Panc1 (cell line): ENCODE measurements at regions of chr12 and their contacts with region 1.

Region 1: GRCh38 chr12:95998611-95999286 is 2.6 kb upstream of the HAL start:
- DNase-seq: peak; percentile 25
- ATAC-seq: peak; percentile 91
- H3K4me3 ChIP-seq: no peak overlapping the region
- H3K27ac ChIP-seq: no peak overlapping the region
- H3K4me1 ChIP-seq: no peaks in the 10 kb centered on the region
- H3K27me3 ChIP-seq: no peaks in the 10 kb centered on the region
- CTCF ChIP-seq: peak; percentile 77

Region 2: GRCh38 chr12:95083938-95084337 is 914.8 kb before region 1 on chr12:
- CTCF ChIA-PET with region 1: interaction called, 10 read pairs
- POLR2A ChIA-PET with region 1: no interaction called
- in situ Hi-C with region 1: no loop called
- intact Hi-C with region 1: no loop called
- DNase-seq: no peak
- ATAC-seq: peak; percentile 94
- H3K4me3 ChIP-seq: no peak overlapping the region; a peak in 1 of 4 replicates
- H3K27ac ChIP-seq: peak overlapping the region; percentile 93
- H3K4me1 ChIP-seq: peaks cover 33% of the 10 kb centered on the region
- H3K27me3 ChIP-seq: no peaks in the 10 kb centered on the region
- CTCF ChIP-seq: no peak

Region 3: GRCh38 chr12:95217377-95218149 is 781.2 kb before region 1 on chr12 and contains the starts of genes FGD6 and VEZT:
- CTCF ChIA-PET with region 1: no interaction called
- POLR2A ChIA-PET with region 1: no interaction called
- in situ Hi-C with region 1: no loop called
- intact Hi-C with region 1: no loop called
- DNase-seq: peak; percentile 96
- ATAC-seq: peak; percentile 93
- H3K4me3 ChIP-seq: peak within 1 kb of the TSS; percentile 93 to 94
- H3K27ac ChIP-seq: peak within 1 kb of the TSS; percentile 97
- H3K4me1 ChIP-seq: peaks cover 30% of the 10 kb centered on the region
- H3K27me3 ChIP-seq: no peaks in the 10 kb centered on the region
- CTCF ChIP-seq: peak; percentile 88
- total RNA-seq, gene FGD6: 28.3 TPM
- total RNA-seq, gene VEZT: 70.6 TPM

Region 4: GRCh38 chr12:95896846-95897245 is 101.9 kb before region 1 on chr12:
- CTCF ChIA-PET with region 1: no interaction called
- POLR2A ChIA-PET with region 1: no interaction called
- in situ Hi-C with region 1: no loop called
- intact Hi-C with region 1: no loop called
- DNase-seq: no peak
- ATAC-seq: no peak
- H3K4me3 ChIP-seq: no peak overlapping the region
- H3K27ac ChIP-seq: no peak overlapping the region
- H3K4me1 ChIP-seq: no peaks in the 10 kb centered on the region
- H3K27me3 ChIP-seq: peaks cover 9% of the 10 kb centered on the region; the same call in 1 of the 2 replicates
- CTCF ChIP-seq: no peak

Region 5: GRCh38 chr12:95918194-95918993 is 80.4 kb before region 1 on chr12:
- CTCF ChIA-PET with region 1: interaction called, 9 read pairs
- POLR2A ChIA-PET with region 1: no interaction called
- in situ Hi-C with region 1: no loop called
- intact Hi-C with region 1: loop called (anchors 5 kb)
- DNase-seq: peak; percentile 39
- ATAC-seq: peak; percentile 91
- H3K4me3 ChIP-seq: no peak overlapping the region
- H3K27ac ChIP-seq: no peak overlapping the region
- H3K4me1 ChIP-seq: no peaks in the 10 kb centered on the region
- H3K27me3 ChIP-seq: peaks cover 19% of the 10 kb centered on the region
- CTCF ChIP-seq: peak; percentile 89

Region 6: GRCh38 chr12:96020314-96021003 is 21.7 kb after region 1 on chr12:
- CTCF ChIA-PET with region 1: no interaction called
- POLR2A ChIA-PET with region 1: no interaction called
- in situ Hi-C with region 1: no loop called
- intact Hi-C with region 1: no loop called
- DNase-seq: no peak
- ATAC-seq: no peak
- H3K4me3 ChIP-seq: no peak overlapping the region
- H3K27ac ChIP-seq: no peak overlapping the region
- H3K4me1 ChIP-seq: no peaks in the 10 kb centered on the region
- H3K27me3 ChIP-seq: no peaks in the 10 kb centered on the region
- CTCF ChIP-seq: no peak

Region 7: GRCh38 chr12:96061864-96062453 is 63.2 kb after region 1 on chr12:
- CTCF ChIA-PET with region 1: no interaction called
- POLR2A ChIA-PET with region 1: no interaction called
- in situ Hi-C with region 1: no loop called
- intact Hi-C with region 1: no loop called
- DNase-seq: peak; percentile 64
- ATAC-seq: peak; percentile 93
- H3K4me3 ChIP-seq: no peak overlapping the region
- H3K27ac ChIP-seq: no peak overlapping the region
- H3K4me1 ChIP-seq: no peaks in the 10 kb centered on the region
- H3K27me3 ChIP-seq: no peaks in the 10 kb centered on the region
- CTCF ChIP-seq: peak; percentile 83